ENCODE measurements at regions of chr19 and their contacts with region 1.

Region 1: GRCh38 chr19:40529093-40529954 is 47.3 kb upstream of the SHKBP1 start:
- DNase-seq: peak; percentile 99
- H3K4me3 ChIP-seq: peak overlapping the region; percentile 44 to 60
- H3K27ac ChIP-seq: peak overlapping the region in 1 of 2 experiments; percentile 70; a peak in 2 of 4 replicates
- H3K4me1 ChIP-seq: peaks cover 0 to 11% of the 10 kb centered on the region in 2 experiments; a peak in 1 of 4 replicates
- H3K27me3 ChIP-seq: no peaks in the 10 kb centered on the region
- CTCF ChIP-seq: peak; percentile 79
- EP300 ChIP-seq: no peak
- RAD21 ChIP-seq: peak; percentile 51

Region 2: GRCh38 chr19:40542202-40542859 is 13.0 kb after region 1 on chr19:
- CTCF ChIA-PET with region 1: interaction called, 14 read pairs
- POLR2A ChIA-PET with region 1: interaction called, 4 read pairs
- DNase-seq: peak; percentile 60
- H3K4me3 ChIP-seq: no peak overlapping the region
- H3K27ac ChIP-seq: peak overlapping the region in 1 of 2 experiments; percentile 19; a peak in 1 of 4 replicates
- H3K4me1 ChIP-seq: peaks cover 0 to 13% of the 10 kb centered on the region in 2 experiments; a peak in 1 of 4 replicates
- H3K27me3 ChIP-seq: no peaks in the 10 kb centered on the region
- CTCF ChIP-seq: no peak
- EP300 ChIP-seq: no peak
- RAD21 ChIP-seq: no peak

Region 3: GRCh38 chr19:40549007-40549708 is 19.8 kb after region 1 on chr19:
- CTCF ChIA-PET with region 1: interaction called, 14 read pairs
- POLR2A ChIA-PET with region 1: no interaction called
- DNase-seq: peak; percentile 95
- H3K4me3 ChIP-seq: peak overlapping the region in 1 of 2 experiments; percentile 10; a peak in 2 of 4 replicates
- H3K27ac ChIP-seq: no peak overlapping the region
- H3K4me1 ChIP-seq: peaks cover 3 to 4% of the 10 kb centered on the region in 2 experiments; a peak in 1 of 4 replicates
- H3K27me3 ChIP-seq: no peaks in the 10 kb centered on the region
- CTCF ChIP-seq: peak; percentile 40
- EP300 ChIP-seq: no peak
- RAD21 ChIP-seq: peak; percentile 50

Region 4: DNA sequence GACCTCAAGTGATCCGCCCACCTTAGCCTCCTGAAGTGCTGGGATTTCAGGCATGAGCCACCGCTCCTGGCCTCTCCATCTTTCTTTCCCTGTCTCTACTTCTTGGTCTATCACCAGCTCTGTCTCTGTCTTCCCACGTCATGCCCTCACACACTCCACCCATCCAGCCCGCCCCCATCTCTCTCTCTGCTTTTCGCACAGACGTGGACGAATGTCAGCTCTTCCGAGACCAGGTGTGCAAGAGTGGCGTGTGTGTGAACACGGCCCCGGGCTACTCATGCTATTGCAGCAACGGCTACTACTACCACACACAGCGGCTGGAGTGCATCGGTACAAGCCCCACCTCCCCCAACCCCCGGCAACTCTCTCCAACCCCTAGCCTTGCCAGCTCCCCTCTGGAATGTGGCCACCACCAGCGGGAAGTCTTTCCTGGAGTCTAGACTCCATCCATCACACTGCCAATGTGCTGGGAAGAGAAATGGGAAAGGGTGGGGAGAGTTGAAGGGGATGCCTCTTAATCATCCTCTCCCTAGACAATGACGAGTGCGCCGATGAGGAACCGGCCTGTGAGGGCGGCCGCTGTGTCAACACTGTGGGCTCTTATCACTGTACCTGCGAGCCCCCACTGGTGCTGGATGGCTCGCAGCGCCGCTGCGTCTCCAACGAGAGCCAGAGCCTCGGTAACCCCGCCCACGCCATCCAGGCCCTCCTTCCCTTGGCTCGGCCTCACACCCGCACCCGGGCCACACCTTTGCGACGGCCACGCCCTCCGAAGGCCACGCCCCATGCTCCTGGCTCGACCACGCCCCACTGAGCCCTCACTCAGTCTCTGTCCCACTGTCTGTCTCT is 94.3 kb after region 1 on chr19:
- CTCF ChIA-PET with region 1: no interaction called
- POLR2A ChIA-PET with region 1: no interaction called
- DNase-seq: peak; percentile 30
- H3K4me3 ChIP-seq: no peak overlapping the region
- H3K27ac ChIP-seq: no peak overlapping the region
- H3K4me1 ChIP-seq: peaks cover 0 to 5% of the 10 kb centered on the region in 2 experiments; a peak in 1 of 4 replicates
- H3K27me3 ChIP-seq: no peaks in the 10 kb centered on the region
- CTCF ChIP-seq: no peak
- EP300 ChIP-seq: no peak
- RAD21 ChIP-seq: no peak